ENCODE measurements at regions of chrX and their contacts with region 1.

Region 1: GRCh38 chrX:21839334-21840192 is at the start of gene MBTPS2:
- DNase-seq: peak; percentile 60
- H3K4me3 ChIP-seq: peak within 1 kb of the TSS; percentile 74
- CTCF ChIP-seq: peak; percentile 21

Region 2: GRCh38 chrX:21821875-21822274 is 17.7 kb before region 1 on chrX:
- CTCF ChIA-PET with region 1: no interaction called
- POLR2A ChIA-PET with region 1: no interaction called
- DNase-seq: no peak
- H3K4me3 ChIP-seq: no peak overlapping the region
- CTCF ChIP-seq: no peak

Region 3: GRCh38 chrX:21972721-21973120 is 133.2 kb after region 1 on chrX:
- CTCF ChIA-PET with region 1: interaction called, 15 read pairs
- POLR2A ChIA-PET with region 1: interaction called, 3 read pairs
- DNase-seq: peak; percentile 47
- H3K4me3 ChIP-seq: no peak overlapping the region
- CTCF ChIP-seq: no peak

Region 4: DNA sequence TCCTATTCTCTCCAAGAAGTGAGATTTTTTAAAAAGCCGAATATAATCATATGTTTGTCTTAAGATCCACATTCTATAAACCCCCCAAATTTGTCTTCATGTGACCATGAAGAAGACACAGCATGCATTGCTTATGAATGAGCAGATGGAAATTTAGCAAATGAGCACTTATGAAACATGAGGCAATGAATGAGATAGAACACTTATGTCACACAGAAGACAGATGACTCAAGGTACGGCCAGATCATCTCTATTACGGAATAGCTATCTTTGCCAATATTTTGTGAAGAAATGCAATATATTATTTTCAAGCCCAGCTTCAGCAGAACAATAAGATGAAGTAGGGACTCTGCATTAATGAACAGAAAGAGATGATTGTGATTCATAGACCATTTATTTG is 213.9 kb after region 1 on chrX:
- CTCF ChIA-PET with region 1: no interaction called
- POLR2A ChIA-PET with region 1: no interaction called
- DNase-seq: no peak
- H3K4me3 ChIP-seq: no peak overlapping the region
- CTCF ChIP-seq: no peak

Measured in AG04449 (cell line).